ENCODE measurements at regions of chr1 and their contacts with region 1.

Region 1: DNA sequence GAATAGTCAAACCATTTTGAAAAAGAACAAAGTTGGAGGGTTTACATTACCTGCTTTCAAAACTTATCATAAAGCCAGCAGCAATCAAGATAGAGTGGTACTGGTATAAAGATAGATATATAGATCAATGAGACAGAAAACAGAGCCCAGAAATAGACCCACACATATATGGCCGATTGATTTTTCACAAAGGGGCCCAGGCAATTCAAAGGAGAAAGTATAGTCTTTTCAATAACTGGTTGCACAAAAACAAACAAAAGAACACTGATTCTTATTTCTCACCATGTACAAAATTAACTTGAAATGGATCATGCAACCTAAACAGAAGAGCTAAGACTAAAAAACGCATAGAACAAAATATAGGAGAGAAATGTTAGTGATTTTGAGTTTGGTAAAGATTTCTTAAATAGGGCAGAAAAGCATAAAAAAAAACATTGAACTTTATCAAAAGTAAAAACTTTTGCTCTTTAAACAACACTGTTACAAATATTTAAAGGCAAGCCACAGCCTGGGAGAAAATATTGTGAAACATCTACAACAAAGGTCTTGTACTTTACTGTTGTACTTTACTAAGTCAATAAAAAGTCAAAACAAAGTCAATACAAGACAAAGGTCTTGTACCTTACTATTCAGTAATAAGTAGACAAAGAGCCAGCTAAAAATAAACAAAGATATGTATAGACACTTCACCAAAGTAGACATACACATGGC is 50.2 kb downstream of the ST3GAL3 start:
- DNase-seq: no peak
- H3K4me3 ChIP-seq: no peak overlapping the region
- H3K27ac ChIP-seq: no peak overlapping the region
- H3K4me1 ChIP-seq: no peaks in the 10 kb centered on the region
- H3K27me3 ChIP-seq: no peaks in the 10 kb centered on the region
- CTCF ChIP-seq: no peak
- POLR2A ChIP-seq: no peak

Region 2: DNA sequence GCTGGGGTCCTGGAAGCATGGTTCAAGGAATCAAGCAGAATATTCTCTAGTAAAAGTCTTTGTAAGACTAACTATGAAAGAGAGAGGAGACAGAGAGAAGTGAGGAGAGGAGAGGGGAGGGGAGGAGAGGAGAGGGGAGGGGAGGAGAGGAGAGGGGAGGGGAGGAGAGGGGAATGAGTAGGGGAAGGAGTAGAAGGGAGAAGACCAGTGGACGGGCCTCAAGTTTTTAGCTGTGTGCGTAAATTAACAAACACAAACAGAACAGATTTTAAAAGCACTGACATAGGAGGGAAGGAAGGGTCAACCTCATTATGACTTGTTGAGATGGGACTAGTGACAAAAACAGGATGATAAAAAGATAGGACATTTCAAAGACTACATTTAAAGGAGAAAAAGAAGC is 12.6 kb after region 1 on chr1:
- intact Hi-C with region 1: loop called (anchors 1 kb)
- DNase-seq: no peak
- H3K4me3 ChIP-seq: no peak overlapping the region
- H3K27ac ChIP-seq: no peak overlapping the region
- H3K4me1 ChIP-seq: peaks cover 12% of the 10 kb centered on the region
- H3K27me3 ChIP-seq: no peaks in the 10 kb centered on the region
- CTCF ChIP-seq: no peak
- POLR2A ChIP-seq: no peak

Region 3: GRCh38 chr1:44049839-44050238 is 292.3 kb after region 1 on chr1:
- intact Hi-C with region 1: no loop called
- DNase-seq: no peak
- H3K4me3 ChIP-seq: no peak overlapping the region
- H3K27ac ChIP-seq: no peak overlapping the region
- H3K4me1 ChIP-seq: no peaks in the 10 kb centered on the region
- H3K27me3 ChIP-seq: no peaks in the 10 kb centered on the region
- CTCF ChIP-seq: no peak
- POLR2A ChIP-seq: no peak